Activated naive CD4-positive, alpha-beta T cell treated with anti-CD3 and anti-CD28 coated beads for 36 hours (primary cell): ENCODE measurements at regions of chr4 and their contacts with region 1.

Region 1: DNA sequence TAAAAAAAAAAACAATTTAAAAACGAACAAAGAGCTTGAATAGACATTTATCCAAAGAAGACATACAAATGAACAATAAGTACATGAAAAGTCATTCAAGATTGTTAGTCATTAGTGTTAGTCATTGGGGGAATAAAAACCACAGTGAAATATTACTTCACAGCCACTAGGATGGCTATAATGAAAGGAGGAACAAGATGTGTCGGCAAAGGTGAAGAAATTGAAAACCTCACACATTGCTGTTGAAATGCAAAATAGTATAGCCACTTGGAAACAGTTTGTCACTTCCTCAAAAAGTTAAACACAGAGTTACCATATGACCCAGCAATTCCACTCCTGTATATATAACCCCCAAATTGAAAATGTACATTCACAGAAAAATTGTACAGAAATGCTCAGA is 45.2 kb upstream of the SLC39A8 start:
- DNase-seq: no peak
- H3K4me3 Mint-ChIP-seq: no peak overlapping the region
- H3K27ac Mint-ChIP-seq: no peak overlapping the region
- H3K4me1 Mint-ChIP-seq: peaks cover 17% of the 10 kb centered on the region
- H3K27me3 Mint-ChIP-seq: peaks cover 4% of the 10 kb centered on the region

Region 2: GRCh38 chr4:101419324-101420135 is 970.9 kb before region 1 on chr4:
- CTCF ChIA-PET with region 1: no interaction called
- intact Hi-C with region 1: loop called (anchors 2 kb)
- DNase-seq: no peak
- H3K4me3 Mint-ChIP-seq: no peak overlapping the region
- H3K27ac Mint-ChIP-seq: no peak overlapping the region
- H3K4me1 Mint-ChIP-seq: peaks cover 36% of the 10 kb centered on the region
- H3K27me3 Mint-ChIP-seq: peaks cover 43% of the 10 kb centered on the region

Region 3: GRCh38 chr4:102007959-102008425 is 382.4 kb before region 1 on chr4:
- CTCF ChIA-PET with region 1: no interaction called
- intact Hi-C with region 1: loop called (anchors 1 kb)
- DNase-seq: peak; percentile 26
- H3K4me3 Mint-ChIP-seq: no peak overlapping the region
- H3K27ac Mint-ChIP-seq: no peak overlapping the region
- H3K4me1 Mint-ChIP-seq: peaks cover 7% of the 10 kb centered on the region
- H3K27me3 Mint-ChIP-seq: no peaks in the 10 kb centered on the region

Region 4: GRCh38 chr4:102404431-102405028 is 14.1 kb after region 1 on chr4:
- CTCF ChIA-PET with region 1: no interaction called
- intact Hi-C with region 1: no loop called
- DNase-seq: no peak
- H3K4me3 Mint-ChIP-seq: no peak overlapping the region
- H3K27ac Mint-ChIP-seq: no peak overlapping the region
- H3K4me1 Mint-ChIP-seq: no peaks in the 10 kb centered on the region
- H3K27me3 Mint-ChIP-seq: no peaks in the 10 kb centered on the region

Region 5: DNA sequence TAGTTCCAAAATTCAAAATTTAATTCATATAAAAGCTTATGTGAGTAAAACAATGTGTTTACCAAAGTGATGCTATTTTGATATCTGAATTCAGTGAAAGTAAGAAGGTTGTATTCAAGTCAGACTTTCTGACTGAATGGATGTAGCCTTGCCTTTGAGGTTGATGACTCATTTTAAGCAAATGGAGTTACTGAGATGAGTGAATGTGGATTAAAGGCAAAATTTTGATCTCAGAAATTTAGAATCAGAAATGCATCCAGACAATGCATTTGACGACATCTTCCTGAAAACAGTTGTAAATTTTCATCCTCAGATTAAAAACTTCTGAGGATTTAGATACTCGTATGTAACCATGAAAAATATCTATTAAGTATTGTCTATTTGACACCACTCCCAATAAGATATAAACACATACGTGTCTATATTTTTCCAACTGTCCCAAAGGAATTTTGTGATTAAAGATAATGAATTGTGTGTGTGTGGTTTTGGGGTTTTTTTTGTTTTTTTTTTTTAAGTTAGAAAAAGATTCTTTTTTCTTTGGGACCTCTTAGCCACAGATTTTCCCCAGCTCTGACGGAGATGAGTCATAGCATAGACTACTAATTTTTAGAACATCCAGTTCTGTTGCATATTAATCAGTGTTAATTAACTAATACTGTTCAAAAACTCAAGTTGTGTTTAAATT is 145.1 kb after region 1 on chr4:
- CTCF ChIA-PET with region 1: no interaction called
- intact Hi-C with region 1: loop called (anchors 5 kb)
- DNase-seq: no peak
- H3K4me3 Mint-ChIP-seq: no peak overlapping the region
- H3K27ac Mint-ChIP-seq: peak overlapping the region; percentile 65
- H3K4me1 Mint-ChIP-seq: peaks cover 72% of the 10 kb centered on the region
- H3K27me3 Mint-ChIP-seq: no peaks in the 10 kb centered on the region

Region 6: DNA sequence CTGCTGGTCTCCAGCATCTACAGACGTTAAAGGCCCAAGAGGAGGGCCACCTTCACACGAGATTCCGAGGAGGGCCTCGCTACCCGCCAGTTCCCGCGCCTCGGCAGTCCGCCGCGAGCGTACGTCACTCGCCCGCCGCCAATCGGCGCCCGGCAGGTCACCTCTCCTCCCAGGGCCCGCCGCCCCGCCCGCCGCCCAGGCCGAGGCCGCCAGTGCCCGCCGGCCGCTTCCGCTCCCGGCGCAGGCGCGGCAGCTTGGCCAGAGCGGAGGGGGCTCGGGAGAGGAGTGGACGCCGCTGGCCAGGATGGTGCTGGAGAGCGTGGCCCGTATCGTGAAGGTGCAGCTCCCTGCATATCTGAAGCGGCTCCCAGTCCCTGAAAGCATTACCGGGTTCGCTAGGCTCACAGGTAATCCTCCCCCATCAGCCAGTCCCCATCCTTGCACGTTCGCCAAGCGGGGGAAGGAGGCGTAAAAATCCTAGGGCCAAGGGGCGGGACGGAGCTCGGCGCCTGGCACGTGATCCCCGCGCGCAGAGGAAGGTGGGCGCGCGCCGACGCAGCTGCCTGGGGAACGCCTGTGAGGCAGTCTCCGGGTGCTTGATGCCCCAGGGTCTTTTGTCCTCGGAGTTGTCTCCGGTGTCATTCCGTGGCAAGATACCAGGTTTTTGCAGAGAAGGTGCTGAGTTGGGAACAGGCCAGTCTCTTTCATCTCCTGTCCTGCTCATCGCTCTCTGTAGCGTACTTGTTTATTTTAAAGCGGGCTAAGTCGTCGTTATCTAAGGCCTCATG is 478.5 kb after region 1 on chr4 and contains the start of gene CISD2:
- CTCF ChIA-PET with region 1: no interaction called
- intact Hi-C with region 1: loop called (anchors 1 kb)
- DNase-seq: peak; percentile 95
- H3K4me3 Mint-ChIP-seq: peak within 1 kb of the TSS; percentile 94
- H3K27ac Mint-ChIP-seq: peak within 1 kb of the TSS; percentile 97
- H3K4me1 Mint-ChIP-seq: peaks cover 51% of the 10 kb centered on the region
- H3K27me3 Mint-ChIP-seq: no peaks in the 10 kb centered on the region
- total RNA-seq, gene CISD2: 25.1 to 25.7 TPM

Region 7: DNA sequence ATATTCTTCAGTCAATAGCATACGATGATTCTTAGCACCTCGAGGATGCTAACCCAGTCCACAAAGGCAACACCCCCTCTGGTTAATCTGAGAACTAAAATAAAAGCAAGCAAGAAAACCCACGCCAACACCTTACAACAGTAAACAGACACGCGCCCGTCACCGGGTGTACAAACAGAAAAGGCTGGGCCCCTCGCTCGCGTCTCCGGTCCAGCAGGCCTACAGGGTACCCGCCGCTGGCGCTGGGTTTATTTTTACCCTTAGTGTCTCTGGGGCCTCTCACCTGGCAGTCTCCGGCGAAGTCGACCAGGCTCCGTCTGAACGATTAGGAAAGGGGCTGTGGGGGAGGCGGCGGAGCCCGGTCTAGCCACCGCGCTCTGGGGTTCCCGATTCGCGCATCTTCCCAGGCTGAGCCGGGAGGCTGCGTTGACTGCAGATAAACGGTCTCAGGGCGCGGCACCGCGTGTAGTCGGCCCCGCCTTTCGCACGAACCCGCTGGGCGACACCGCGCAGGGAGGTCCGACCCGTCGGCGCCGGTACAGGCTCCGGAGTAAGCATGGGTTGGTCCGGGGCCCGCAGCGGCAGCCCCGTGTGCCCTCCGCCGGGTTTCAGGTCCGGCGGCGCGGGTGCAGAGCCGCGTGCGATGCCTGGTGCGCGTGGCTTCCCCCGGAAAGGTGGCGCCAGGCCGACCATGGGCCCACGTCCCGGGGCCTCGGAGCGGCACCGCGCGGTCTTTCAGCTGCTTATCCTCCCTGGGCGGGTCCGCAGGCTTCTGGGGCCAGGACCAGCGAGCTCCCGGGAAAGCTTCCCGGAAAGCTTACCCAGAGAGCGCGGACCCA is 685.7 kb after region 1 on chr4:
- CTCF ChIA-PET with region 1: no interaction called
- intact Hi-C with region 1: loop called (anchors 1 kb)
- DNase-seq: peak; percentile 62
- H3K4me3 Mint-ChIP-seq: peak overlapping the region; percentile 82
- H3K27ac Mint-ChIP-seq: peak overlapping the region; percentile 98
- H3K4me1 Mint-ChIP-seq: peaks cover 47% of the 10 kb centered on the region
- H3K27me3 Mint-ChIP-seq: no peaks in the 10 kb centered on the region